Activated CD4-positive, alpha-beta memory T cell treated with anti-CD3 and anti-CD28 coated beads for 36 hours (primary cell): ENCODE measurements at regions of chr14 and their contacts with region 1.

Region 1: GRCh38 chr14:79638672-79639266 is 572.5 kb downstream of the DIO2 start:
- DNase-seq: no peak
- H3K4me3 Mint-ChIP-seq: no peak overlapping the region
- H3K27ac Mint-ChIP-seq: no peak overlapping the region
- H3K4me1 Mint-ChIP-seq: no peaks in the 10 kb centered on the region
- H3K27me3 Mint-ChIP-seq: no peaks in the 10 kb centered on the region

Region 2: GRCh38 chr14:79596531-79596930 is 42.2 kb before region 1 on chr14:
- CTCF ChIA-PET with region 1: no interaction called
- POLR2A ChIA-PET with region 1: no interaction called
- intact Hi-C with region 1: no loop called
- DNase-seq: no peak
- H3K4me3 Mint-ChIP-seq: no peak overlapping the region
- H3K27ac Mint-ChIP-seq: no peak overlapping the region
- H3K4me1 Mint-ChIP-seq: no peaks in the 10 kb centered on the region
- H3K27me3 Mint-ChIP-seq: no peaks in the 10 kb centered on the region

Region 3: DNA sequence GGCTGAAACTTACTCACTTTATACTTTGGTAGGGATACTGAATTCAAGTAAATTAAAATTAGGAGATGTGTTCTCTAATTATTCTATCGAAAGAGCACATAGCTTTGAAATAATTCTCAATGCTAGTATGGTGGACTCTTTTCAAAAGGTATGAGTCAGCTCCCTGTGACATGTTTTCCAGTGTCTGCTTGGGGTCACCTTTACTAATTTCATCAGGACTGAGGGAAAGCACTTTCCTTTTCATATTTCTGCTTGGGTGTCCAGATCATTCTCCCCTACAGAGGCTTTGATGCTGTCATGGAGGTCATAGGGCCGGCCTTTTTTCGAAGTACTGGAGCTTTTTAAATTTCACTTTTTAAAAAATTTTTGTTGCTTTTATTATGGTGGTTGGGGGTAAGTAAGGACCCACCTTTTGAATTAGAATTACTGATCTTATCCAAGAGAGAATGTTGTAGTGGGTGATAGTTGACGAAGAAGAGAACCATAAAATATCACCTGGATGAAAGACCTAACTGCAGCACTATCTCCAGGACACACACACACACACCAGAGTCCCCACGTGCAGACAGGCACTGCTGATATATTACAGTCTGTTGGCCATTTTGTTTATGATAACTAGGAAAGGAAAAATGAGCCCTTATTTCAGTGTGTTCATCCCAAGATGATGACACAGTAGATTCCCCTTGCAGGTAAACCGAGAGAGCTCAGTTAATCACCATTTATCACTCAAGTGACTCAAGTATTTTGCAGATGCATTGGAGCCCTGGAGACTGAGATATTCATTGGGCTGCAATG is 13.9 kb after region 1 on chr14:
- CTCF ChIA-PET with region 1: no interaction called
- POLR2A ChIA-PET with region 1: no interaction called
- intact Hi-C with region 1: loop called (anchors 2 kb)
- DNase-seq: no peak
- H3K4me3 Mint-ChIP-seq: no peak overlapping the region
- H3K27ac Mint-ChIP-seq: no peak overlapping the region
- H3K4me1 Mint-ChIP-seq: no peaks in the 10 kb centered on the region
- H3K27me3 Mint-ChIP-seq: no peaks in the 10 kb centered on the region